Lower leg skin (tissue), 4 donors: ENCODE measurements at regions of chr1 and their contacts with region 1.

Region 1: DNA sequence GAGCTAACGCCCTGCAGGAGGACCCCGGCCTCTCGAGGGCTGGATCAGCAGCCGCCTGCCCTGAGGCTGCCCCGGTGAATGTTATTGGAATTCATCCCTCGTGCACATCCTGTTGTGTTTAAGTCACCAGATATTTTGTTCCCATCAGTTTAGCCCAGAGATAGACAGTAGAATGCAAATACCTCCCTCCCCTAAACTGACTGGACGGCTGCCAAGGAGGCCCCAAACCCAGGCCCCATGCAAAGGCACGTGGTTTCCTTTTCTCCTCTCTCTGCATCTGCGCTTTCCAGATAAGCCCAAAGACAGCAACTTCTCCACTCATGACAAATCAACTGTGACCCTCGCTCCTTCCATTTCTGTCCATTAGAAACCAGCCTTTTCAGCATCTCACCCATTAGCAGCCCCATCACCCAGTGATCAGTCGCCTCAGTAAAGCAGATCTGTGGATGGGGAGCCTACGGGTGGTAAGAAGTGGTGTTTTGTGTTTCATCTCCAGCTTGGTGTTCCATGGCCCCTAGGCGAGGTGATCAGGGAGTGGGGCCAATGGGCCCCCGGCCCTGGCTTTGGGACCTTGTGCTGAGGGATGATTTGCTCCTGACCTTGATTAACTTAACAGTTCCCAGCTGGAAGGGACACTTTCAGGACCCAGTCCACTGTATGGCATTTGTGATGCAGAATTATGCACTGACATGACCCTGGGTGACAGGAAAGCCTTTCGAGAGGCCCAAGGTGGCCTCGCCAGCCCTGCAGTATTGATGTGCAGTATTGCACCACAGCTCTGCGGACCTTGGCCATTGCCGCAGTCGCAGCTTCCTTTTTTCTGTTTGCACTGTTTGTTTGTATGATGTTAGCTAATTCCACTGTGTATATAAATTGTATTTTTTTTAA is 5.2 kb downstream of the NPPA start:
- DNase-seq: peak in 1 of 2 donors; percentile 30
- H3K4me3 ChIP-seq: no peak overlapping the region
- CTCF ChIP-seq: no peak
- POLR2A ChIP-seq: no peak

Region 2: DNA sequence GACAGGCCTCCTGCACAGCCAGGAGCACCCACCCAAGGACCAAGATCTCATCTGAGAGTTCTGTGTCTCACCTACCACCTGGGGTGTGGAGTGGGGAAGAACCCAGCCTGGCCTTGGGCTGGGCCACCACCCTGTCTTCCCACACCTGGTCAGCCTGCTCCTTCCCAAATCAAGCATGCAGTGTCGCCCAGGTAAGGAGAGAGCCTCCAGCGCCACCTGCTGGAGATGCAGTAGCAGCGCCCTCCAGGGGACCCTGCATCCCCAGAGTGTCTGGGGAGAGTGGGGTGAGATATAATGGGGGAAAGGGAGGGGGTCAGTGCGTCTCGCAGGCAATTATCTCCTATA is 51.5 kb after region 1 on chr1:
- intact Hi-C with region 1: loop called (anchors 10 kb)
- DNase-seq: no peak
- H3K4me3 ChIP-seq: no peak overlapping the region
- CTCF ChIP-seq: no peak
- POLR2A ChIP-seq: no peak

Region 3: DNA sequence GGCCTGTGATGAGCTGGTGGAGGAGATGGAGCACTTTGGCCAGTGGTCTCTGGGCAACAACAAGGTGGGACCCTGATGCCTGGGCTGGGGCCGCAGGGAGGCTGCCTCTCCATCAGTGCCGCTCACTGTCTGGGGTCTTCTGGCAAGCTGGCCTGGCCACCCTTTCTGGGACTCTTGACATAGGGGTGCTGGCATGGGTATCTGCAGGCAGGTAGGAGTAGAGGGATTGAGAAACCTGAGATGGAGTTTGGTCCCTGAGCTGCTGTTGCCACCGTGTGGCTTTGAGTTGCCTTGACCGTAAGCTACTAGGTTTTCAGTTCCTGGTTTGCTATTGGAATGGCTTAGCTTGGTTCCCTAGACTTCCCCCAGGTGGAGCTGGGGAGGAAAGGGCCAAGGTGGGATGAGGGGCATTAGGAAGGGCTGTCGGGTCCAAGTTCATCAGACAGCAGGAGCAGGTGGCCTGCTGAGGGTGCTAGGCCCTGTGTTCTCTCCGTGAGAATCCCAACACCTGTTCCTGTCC is 124.7 kb after region 1 on chr1:
- intact Hi-C with region 1: loop called (anchors 5 kb)
- DNase-seq: no peak
- H3K4me3 ChIP-seq: no peak overlapping the region
- CTCF ChIP-seq: no peak
- POLR2A ChIP-seq: no peak

Region 4: DNA sequence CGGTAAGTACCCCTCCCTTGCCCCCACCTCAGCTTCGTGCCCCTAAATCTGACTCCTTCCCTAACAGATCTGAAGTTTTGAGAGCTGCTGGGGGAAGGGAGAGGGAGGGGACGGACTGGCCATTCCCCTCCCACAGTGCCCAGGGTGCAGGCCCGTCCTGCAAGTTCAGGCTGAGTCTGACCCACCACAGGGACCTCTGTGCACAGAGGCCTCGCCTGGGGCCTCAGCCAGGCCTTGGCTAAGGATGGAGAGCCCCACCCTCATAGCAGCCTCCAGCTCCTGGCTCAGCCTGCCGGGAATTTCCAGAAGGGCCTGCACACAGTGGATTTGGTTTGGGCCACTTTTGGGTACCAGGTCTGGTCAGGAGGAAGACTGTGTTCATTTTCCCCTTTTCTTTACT is 293.2 kb after region 1 on chr1:
- intact Hi-C with region 1: loop called (anchors 5 kb)
- DNase-seq: peak in 1 of 2 donors; percentile 90
- H3K4me3 ChIP-seq: no peak overlapping the region
- CTCF ChIP-seq: no peak
- POLR2A ChIP-seq: no peak